Activated CD4-positive, alpha-beta T cell treated with anti-CD3 and anti-CD28 coated beads, Interleukin-2, amount 10 ng/mL, durations not matched to agents 24 days and 14 days (primary cell): ENCODE measurements at regions of chr6 and their contacts with region 1.

Region 1: GRCh38 chr6:27479319-27480182 is 6.6 kb upstream of the ZNF184 start:
- DNase-seq: peak; percentile 96
- H3K4me3 Mint-ChIP-seq: no peak overlapping the region
- H3K27ac Mint-ChIP-seq: no peak overlapping the region
- H3K4me1 Mint-ChIP-seq: peaks cover 6% of the 10 kb centered on the region
- H3K27me3 Mint-ChIP-seq: peaks cover 9% of the 10 kb centered on the region

Region 2: DNA sequence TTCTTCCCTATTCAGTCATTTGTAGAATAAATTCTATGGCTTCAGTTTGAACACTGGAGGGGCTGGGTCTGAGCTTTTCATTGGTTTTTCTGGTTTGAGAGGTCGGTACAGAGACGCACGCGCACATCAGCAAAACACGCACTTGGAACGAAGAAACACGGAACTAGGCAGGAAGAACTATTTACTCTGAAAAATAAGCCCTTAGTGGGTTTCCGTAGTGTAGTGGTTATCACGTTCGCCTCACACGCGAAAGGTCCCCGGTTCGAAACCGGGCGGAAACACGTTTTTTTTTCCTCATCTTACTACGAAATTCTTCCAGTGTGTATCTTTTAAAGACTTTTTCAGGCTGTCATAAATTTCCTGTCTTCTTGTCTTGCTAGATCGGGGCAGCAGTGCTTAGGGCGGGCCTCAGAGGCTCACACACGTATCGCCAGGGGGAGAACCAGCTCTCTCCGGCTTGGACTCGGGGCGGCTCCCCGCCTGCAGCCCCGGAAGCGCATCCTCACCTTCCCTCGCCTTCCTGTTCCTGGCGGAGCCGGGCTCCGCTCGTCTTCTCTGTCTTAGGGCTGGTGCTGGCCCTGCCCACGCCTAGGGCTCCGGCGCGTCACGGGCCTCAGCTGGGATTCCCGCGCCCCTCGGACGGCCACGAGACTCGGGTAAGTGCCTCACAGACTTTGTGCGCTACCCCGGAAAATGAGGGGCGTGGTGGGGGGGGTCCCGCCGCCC is 941.5 kb before region 1 on chr6 and contains the start of gene HMGN4:
- intact Hi-C with region 1: loop called (anchors 2 kb)
- DNase-seq: peak; percentile 95
- H3K4me3 Mint-ChIP-seq: peak within 1 kb of the TSS; percentile 93
- H3K27ac Mint-ChIP-seq: peak within 1 kb of the TSS; percentile 95
- H3K4me1 Mint-ChIP-seq: peaks cover 51% of the 10 kb centered on the region
- H3K27me3 Mint-ChIP-seq: peaks cover 2% of the 10 kb centered on the region
- total RNA-seq, gene HMGN4: 81.6 and 83.4 TPM in 2 replicates

Region 3: GRCh38 chr6:27177485-27178406 is 301.8 kb before region 1 on chr6:
- intact Hi-C with region 1: loop called (anchors 1 kb)
- DNase-seq: peak; percentile 92
- H3K4me3 Mint-ChIP-seq: peak overlapping the region; percentile 95
- H3K27ac Mint-ChIP-seq: peak overlapping the region; percentile 93
- H3K4me1 Mint-ChIP-seq: peaks cover 17% of the 10 kb centered on the region
- H3K27me3 Mint-ChIP-seq: peaks cover 33% of the 10 kb centered on the region

Region 4: GRCh38 chr6:27503436-27504030 is 24.0 kb after region 1 on chr6:
- intact Hi-C with region 1: loop called (anchors 1 kb)
- DNase-seq: peak; percentile 92
- H3K4me3 Mint-ChIP-seq: peak overlapping the region; percentile 94
- H3K27ac Mint-ChIP-seq: peak overlapping the region; percentile 81
- H3K4me1 Mint-ChIP-seq: peaks cover 19% of the 10 kb centered on the region
- H3K27me3 Mint-ChIP-seq: peaks cover 46% of the 10 kb centered on the region

Region 5: DNA sequence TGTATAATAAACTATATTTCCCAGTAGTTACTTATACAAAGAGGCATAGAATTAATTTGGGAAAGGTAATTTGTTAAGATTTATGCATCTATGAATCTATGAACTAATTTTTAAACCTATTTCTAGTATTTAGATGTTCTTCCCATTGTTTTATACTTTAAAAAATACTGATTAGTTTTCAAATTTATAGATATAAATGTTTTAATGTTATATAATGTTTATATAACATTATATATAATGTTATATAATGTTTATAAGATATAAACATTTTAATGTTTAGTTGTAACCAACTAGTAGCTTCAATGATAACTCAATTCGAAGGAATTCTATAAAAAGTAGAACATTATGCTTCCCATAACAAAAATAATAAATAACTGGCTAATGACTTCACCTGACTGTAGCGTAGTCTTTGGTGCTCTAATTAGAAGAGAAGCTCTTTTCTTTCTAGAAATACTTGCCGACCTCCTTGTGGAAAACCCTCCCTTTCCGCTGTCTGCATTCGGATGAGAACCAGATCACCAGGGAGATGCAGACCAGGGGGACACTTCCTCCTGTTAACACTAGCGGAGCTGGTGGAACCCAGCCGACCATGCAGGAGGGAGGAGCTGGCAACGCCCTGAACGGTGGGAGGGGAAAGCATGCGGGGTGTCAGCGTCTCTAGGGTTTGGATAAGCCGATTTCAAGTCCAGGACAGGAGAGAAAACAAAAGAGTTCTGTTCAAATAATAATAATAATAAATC is 274.3 kb after region 1 on chr6:
- intact Hi-C with region 1: loop called (anchors 1 kb)
- DNase-seq: peak; percentile 91
- H3K4me3 Mint-ChIP-seq: peak overlapping the region; percentile 86
- H3K27ac Mint-ChIP-seq: peak overlapping the region; percentile 83
- H3K4me1 Mint-ChIP-seq: peaks cover 49% of the 10 kb centered on the region
- H3K27me3 Mint-ChIP-seq: no peaks in the 10 kb centered on the region

Region 6: GRCh38 chr6:28124102-28124970 is 644.8 kb after region 1 on chr6 and contains the start of gene ZSCAN16:
- intact Hi-C with region 1: loop called (anchors 5 kb)
- DNase-seq: peak; percentile 92
- H3K4me3 Mint-ChIP-seq: peak within 1 kb of the TSS; percentile 95
- H3K27ac Mint-ChIP-seq: peak within 1 kb of the TSS; percentile 83
- H3K4me1 Mint-ChIP-seq: peaks cover 48% of the 10 kb centered on the region
- H3K27me3 Mint-ChIP-seq: no peaks in the 10 kb centered on the region
- total RNA-seq, gene ZSCAN16: 3.0 and 4.0 TPM in 2 replicates